ENCODE measurements at regions of chr11 and their contacts with region 1.

Region 1: DNA sequence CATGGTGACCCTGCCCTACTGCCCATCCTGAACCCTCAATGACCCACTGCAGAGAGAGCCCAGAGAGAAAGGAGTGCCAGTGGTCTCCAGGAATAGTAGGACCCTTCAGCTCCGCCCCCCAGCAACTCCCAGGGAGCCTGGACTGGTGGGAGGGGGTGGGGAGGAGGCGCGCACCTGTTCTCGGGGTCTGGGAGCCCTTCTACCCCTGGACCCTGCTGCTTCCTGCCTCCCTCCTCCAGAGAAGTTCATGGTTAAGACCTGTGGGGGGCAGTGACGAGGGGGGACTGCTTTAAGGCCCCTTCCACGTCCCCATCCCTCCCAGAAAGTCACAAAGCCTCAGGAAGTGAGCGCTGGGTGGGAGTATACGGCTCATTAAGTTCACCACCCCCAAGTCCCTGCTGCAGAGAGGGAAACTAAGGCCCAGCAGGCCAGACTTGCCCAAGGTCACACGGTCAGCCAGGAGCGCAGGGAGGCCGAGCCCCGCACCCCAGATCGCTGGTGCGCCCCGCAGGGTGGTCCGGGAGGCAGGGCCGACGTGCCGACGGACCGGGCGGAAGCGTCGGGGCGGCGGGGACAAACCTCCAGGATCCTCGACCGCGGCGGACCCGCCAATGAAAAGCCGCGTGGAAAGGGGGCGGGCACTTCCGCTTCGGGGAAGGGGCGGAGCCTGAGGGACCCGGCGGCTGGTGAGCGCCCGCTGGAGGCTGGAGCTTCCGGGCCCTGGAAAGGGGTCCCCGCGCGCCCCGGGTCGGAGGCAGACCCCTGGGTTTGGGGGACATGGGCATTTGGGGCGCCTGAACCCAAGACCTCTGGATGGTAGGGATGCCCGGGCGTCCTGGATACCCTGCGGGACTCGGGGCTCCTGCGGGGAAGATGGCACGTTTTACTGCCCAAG is at the starts of genes NUDT22 and TRPT1:
- DNase-seq: peak; percentile 79 to 96 (median 91)
- ATAC-seq: peak; percentile 67
- H3K4me3 ChIP-seq: peak within 1 kb of the TSS; percentile 99
- H3K4me3 Mint-ChIP-seq: peak within 1 kb of the TSS; percentile 97
- H3K27ac ChIP-seq: peak within 1 kb of the TSS; percentile 77 to 87
- H3K27ac Mint-ChIP-seq: peak within 1 kb of the TSS; percentile 87
- H3K4me1 ChIP-seq: peaks cover 57% of the 10 kb centered on the region
- H3K4me1 Mint-ChIP-seq: peaks cover 39% of the 10 kb centered on the region
- H3K27me3 ChIP-seq: no peaks in the 10 kb centered on the region
- H3K27me3 Mint-ChIP-seq: no peaks in the 10 kb centered on the region
- CTCF ChIP-seq: peak; percentile 7
- total RNA-seq, gene NUDT22: 26.8 to 26.9 TPM
- total RNA-seq, gene TRPT1: 11.3 to 11.5 TPM

Region 2: DNA sequence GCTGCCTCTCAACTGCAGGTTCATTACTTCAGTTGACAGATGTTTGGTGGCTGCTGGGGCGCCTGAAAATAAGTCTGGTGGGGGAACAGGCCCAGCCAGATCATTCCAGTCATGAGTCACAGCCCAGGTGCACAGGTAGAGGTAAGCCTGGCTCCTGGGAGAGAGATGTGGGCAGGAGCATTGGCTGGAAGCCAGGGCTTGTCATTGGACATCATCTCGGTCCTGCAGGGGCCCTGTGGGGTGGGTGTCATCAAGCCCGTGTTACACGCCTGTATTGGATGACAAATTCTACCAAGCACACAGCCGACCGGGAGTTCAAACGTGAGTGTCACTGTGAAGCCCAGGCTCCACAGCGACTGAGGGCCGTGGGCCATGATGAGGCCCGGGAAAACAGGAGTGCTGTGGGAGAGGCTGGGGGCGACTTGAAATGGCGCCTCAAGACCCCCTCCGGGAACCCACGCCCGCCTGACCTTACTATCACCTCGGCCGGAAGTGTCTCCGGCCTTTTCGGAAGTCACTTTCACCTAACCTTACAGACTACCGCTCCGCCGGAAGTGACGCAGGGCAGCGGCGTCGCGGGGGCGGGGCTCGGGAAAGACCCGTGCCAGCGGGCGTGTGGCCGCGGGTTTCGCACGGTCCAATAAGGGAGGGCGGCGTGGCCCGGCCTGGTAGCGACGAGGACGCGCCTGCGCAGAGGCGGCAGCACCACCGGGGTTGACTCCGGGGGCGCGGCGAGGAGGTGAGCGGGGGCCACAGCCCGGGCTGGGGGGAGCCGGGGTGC is 14.7 kb after region 1 on chr11 and contains the start of gene FKBP2:
- CTCF ChIA-PET with region 1: interaction called, 10 read pairs
- POLR2A ChIA-PET with region 1: interaction called, 28 read pairs
- intact Hi-C with region 1: loop called (anchors 1 kb)
- DNase-seq: peak; percentile 92 to 100 (median 97)
- ATAC-seq: peak; percentile 66
- H3K4me3 ChIP-seq: peak within 1 kb of the TSS; percentile 80
- H3K4me3 Mint-ChIP-seq: peak within 1 kb of the TSS; percentile 98
- H3K27ac ChIP-seq: peak within 1 kb of the TSS; percentile 97 to 100
- H3K27ac Mint-ChIP-seq: peak within 1 kb of the TSS; percentile 100
- H3K4me1 ChIP-seq: peaks cover 59% of the 10 kb centered on the region
- H3K4me1 Mint-ChIP-seq: peaks cover 40% of the 10 kb centered on the region
- H3K27me3 ChIP-seq: no peaks in the 10 kb centered on the region
- H3K27me3 Mint-ChIP-seq: no peaks in the 10 kb centered on the region
- CTCF ChIP-seq: no peak
- total RNA-seq, gene FKBP2: 11.2 to 14.6 TPM

Region 3: DNA sequence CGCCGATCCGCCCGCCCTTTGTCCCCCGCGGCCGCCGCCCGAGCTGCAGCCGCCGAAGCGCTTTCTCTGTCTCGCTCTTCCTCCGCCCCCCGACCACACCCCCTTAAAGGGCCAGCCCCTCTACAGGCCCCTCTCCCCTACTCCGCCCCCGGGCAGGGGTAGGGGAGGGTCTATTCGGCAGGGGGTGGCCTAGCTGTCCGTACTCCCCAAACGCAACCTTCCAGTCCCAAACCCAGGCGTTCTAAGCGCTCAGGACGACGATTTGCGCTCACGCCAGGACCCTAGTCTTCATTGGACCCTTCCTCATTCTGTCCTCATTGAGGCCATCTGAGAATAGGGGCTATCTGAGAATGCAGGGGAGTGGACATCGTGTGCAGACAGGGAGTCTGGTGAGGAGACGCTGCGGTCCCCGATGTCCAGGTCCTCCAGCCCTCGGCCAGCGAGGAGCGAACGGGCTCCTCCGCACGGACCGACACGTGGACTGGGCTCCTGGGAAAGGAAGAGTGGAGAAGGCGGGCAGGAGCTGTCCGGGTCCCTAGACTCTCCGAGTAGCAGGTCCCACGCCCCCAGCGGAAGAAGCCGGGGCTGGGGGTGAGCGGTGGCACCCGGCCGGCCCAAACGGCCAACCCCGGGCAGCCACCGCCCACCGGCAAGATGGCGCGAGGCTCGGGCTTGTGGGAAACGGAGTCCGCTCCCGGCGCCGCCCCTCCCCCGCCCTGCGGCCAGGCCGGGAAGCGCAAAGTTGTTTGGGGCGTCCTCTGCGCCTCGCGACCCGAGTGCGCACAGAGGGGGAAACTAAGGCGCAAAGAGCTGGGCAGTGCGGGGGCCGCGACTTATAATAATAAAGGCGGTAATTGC is 21.2 kb after region 1 on chr11 and contains the start of gene PPP1R14B:
- CTCF ChIA-PET with region 1: interaction called, 10 read pairs
- POLR2A ChIA-PET with region 1: interaction called, 28 read pairs
- intact Hi-C with region 1: no loop called
- DNase-seq: peak; percentile 60 to 89 (median 76)
- ATAC-seq: peak; percentile 63
- H3K4me3 ChIP-seq: peak within 1 kb of the TSS; percentile 90
- H3K4me3 Mint-ChIP-seq: peak within 1 kb of the TSS; percentile 94
- H3K27ac ChIP-seq: peak within 1 kb of the TSS; percentile 48 to 57
- H3K27ac Mint-ChIP-seq: peak within 1 kb of the TSS; percentile 82
- H3K4me1 ChIP-seq: peaks cover 61% of the 10 kb centered on the region
- H3K4me1 Mint-ChIP-seq: peaks cover 41% of the 10 kb centered on the region
- H3K27me3 ChIP-seq: no peaks in the 10 kb centered on the region
- H3K27me3 Mint-ChIP-seq: no peaks in the 10 kb centered on the region
- CTCF ChIP-seq: no peak
- total RNA-seq, gene PPP1R14B: 17.1 to 21.0 TPM

Measured in CD4-positive, alpha-beta T cell (primary cell).